HepG2 (cell line): ENCODE measurements at regions of chr11 and their contacts with region 1.

Region 1: DNA sequence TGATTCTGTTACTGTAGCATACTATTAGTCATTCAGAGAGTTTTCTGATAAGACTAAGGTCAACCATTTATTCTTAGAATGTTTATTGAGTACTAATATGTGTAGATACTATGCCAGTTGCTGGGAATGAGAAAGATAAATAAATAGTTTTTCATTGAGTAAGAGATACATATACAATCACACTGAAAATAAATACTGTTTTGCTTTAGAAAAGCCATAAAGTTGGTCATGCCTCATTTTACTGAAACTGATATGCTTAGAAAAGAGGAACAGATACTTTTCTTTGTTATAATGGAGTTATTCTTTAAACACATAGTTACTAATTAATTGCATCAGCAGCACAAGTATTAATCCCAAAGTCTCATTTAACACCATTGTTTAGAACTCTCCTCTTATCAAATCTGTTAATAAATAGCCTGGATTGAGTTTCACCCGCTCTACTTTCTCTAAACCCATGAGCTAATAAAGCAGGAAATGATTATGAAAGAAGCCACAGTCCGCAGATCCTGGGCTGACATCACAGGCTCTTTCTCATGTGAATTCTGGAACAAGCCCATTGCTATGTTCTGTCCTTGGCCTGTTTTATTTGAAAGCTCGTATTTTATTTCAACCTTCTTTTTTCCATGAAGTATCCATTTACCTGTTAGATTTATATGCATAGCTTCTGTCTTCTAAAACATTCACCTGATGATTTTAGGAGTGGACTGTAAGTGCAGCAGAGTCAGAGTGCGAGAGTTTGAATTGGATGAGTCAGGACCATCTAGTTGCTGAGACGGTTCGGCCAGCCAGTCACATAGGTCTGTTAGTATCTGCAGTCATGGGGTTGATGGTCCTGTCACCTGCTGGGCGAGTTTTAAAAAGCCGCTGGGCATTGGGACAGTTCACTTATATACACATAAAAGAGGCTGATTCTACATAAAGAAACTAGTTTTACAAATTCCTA is 35.5 kb downstream of the PIWIL4 start:
- DNase-seq: peak; percentile 66
- ATAC-seq: peak; percentile 100
- H3K4me3 ChIP-seq: no peak overlapping the region
- H3K27ac ChIP-seq: no peak overlapping the region
- H3K4me1 ChIP-seq: peaks cover 8% of the 10 kb centered on the region
- H3K27me3 ChIP-seq: no peaks in the 10 kb centered on the region; a peak in 1 of 5 replicates
- CTCF ChIP-seq: peak; percentile 73
- EP300 ChIP-seq: no peak
- POLR2A ChIP-seq: no peak
- RAD21 ChIP-seq: no peak

Region 2: GRCh38 chr11:93895106-93895862 is 707.4 kb before region 1 on chr11:
- CTCF ChIA-PET with region 1: interaction called, 11 read pairs
- POLR2A ChIA-PET with region 1: no interaction called
- in situ Hi-C with region 1: no loop called
- intact Hi-C with region 1: no loop called
- DNase-seq: peak; percentile 37
- ATAC-seq: peak; percentile 78
- H3K4me3 ChIP-seq: no peak overlapping the region
- H3K27ac ChIP-seq: no peak overlapping the region
- H3K4me1 ChIP-seq: no peaks in the 10 kb centered on the region
- H3K27me3 ChIP-seq: peaks cover 0 to 5% of the 10 kb centered on the region in 2 experiments; a peak in 1 of 5 replicates
- CTCF ChIP-seq: peak; percentile 73
- EP300 ChIP-seq: no peak
- POLR2A ChIP-seq: no peak
- RAD21 ChIP-seq: 0 out of 2 replicates have a peak, but pooled peaks have one; percentile 35

Region 3: GRCh38 chr11:93921695-93922468 is 680.8 kb before region 1 on chr11:
- CTCF ChIA-PET with region 1: no interaction called
- POLR2A ChIA-PET with region 1: no interaction called
- in situ Hi-C with region 1: no loop called
- intact Hi-C with region 1: loop called (anchors 10 kb)
- DNase-seq: peak; percentile 56
- ATAC-seq: peak; percentile 85
- H3K4me3 ChIP-seq: no peak overlapping the region
- H3K27ac ChIP-seq: no peak overlapping the region
- H3K4me1 ChIP-seq: peaks cover 19% of the 10 kb centered on the region
- H3K27me3 ChIP-seq: no peaks in the 10 kb centered on the region
- CTCF ChIP-seq: peak; percentile 87
- EP300 ChIP-seq: no peak
- POLR2A ChIP-seq: no peak
- RAD21 ChIP-seq: peak; percentile 76

Region 4: DNA sequence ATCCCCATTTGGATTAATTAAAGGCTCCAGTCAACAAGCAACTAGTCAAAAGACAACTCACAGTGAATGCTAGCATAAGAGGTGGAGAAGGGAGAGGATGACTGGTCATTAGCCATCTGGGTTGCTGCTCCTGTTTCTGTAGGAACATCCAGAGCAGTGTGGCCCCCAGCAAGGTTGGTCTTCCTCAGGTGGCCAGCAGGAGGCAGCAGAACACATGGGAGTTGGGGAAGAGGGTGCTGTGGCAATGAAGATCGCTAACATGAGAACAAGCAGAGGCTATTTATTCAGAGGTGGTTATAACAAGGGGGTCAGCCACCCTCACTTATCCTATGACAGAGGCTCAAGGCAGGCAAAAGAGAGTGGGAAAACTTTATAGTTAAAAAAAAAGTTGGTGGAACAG is 277.0 kb before region 1 on chr11:
- CTCF ChIA-PET with region 1: no interaction called
- POLR2A ChIA-PET with region 1: no interaction called
- in situ Hi-C with region 1: no loop called
- intact Hi-C with region 1: loop called (anchors 1 kb)
- DNase-seq: peak; percentile 39
- ATAC-seq: peak; percentile 95
- H3K4me3 ChIP-seq: no peak overlapping the region
- H3K27ac ChIP-seq: no peak overlapping the region
- H3K4me1 ChIP-seq: no peaks in the 10 kb centered on the region
- H3K27me3 ChIP-seq: no peaks in the 10 kb centered on the region; a peak in 1 of 5 replicates
- CTCF ChIP-seq: peak; percentile 84
- EP300 ChIP-seq: no peak
- POLR2A ChIP-seq: no peak
- RAD21 ChIP-seq: peak; percentile 71

Region 5: DNA sequence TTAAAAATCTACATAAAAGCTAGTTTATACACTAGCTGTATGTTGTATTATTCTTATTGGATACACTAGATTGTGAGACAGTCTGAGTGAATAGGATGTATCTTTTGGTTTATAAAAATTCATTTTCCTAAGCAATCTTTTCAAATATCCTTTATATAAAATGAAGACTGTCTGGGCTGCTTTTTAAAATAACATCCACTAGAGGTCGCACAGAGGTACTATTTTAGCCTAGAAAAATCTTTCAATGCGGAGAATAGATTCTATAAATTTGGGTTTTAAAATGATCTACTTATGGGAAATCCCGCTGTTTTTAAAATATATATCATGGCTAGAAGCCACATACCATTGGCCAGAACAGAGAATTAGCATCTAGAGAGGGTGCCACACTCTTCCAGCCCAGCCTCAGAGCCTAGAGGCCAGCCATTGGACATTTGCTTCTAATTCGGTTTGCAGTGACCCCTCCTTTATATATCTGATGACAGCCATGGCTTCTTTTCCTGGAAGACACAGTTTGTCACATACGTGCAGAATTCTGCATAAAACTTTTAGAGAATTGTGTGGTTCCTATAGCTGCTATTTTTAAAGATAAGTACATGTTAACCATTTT is 83.1 kb before region 1 on chr11:
- CTCF ChIA-PET with region 1: interaction called, 8 read pairs
- POLR2A ChIA-PET with region 1: no interaction called
- in situ Hi-C with region 1: loop called (anchors 5 kb)
- intact Hi-C with region 1: loop called (anchors 1 kb)
- DNase-seq: no peak
- ATAC-seq: no peak
- H3K4me3 ChIP-seq: no peak overlapping the region
- H3K27ac ChIP-seq: no peak overlapping the region
- H3K4me1 ChIP-seq: peaks cover 23% of the 10 kb centered on the region
- H3K27me3 ChIP-seq: no peaks in the 10 kb centered on the region
- CTCF ChIP-seq: peak; percentile 43
- EP300 ChIP-seq: no peak
- POLR2A ChIP-seq: no peak
- RAD21 ChIP-seq: no peak

Region 6: DNA sequence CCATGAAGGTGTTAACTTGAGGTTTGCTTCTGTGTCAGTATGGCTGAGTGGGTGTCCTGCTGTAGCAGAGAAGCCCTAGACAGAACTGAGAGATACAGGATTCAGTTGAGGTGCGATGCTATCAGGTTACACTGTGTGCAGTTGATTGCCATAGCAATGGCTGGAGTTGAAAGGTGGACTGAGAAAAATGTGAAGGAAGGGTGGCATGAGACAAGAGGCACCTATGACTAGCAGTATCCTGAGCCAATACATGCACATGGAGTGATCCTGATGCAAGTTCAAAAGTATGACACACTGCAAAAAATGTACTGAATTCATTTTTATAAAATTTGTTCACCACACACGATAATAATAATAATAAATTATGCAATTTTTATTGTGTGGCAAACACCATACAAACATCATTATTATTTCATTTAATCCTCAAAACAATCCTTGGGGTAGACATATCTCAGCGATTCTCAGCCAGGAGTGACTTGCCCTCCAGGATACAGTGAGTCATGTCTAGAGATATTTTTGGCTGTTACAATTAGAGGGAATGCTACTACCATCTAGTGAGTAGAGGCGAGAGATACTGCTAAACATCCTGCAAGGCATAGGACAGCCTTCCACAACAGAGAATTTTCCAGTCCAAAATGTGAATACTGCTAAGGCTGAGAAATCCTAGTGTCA is 39.4 kb before region 1 on chr11:
- CTCF ChIA-PET with region 1: no interaction called
- POLR2A ChIA-PET with region 1: no interaction called
- in situ Hi-C with region 1: no loop called
- intact Hi-C with region 1: no loop called
- DNase-seq: no peak
- ATAC-seq: no peak
- H3K4me3 ChIP-seq: no peak overlapping the region
- H3K27ac ChIP-seq: no peak overlapping the region
- H3K4me1 ChIP-seq: no peaks in the 10 kb centered on the region
- H3K27me3 ChIP-seq: no peaks in the 10 kb centered on the region
- CTCF ChIP-seq: no peak
- EP300 ChIP-seq: no peak
- POLR2A ChIP-seq: no peak
- RAD21 ChIP-seq: no peak

Region 7: GRCh38 chr11:94721565-94722292 is 119.0 kb after region 1 on chr11:
- CTCF ChIA-PET with region 1: no interaction called
- POLR2A ChIA-PET with region 1: no interaction called
- in situ Hi-C with region 1: no loop called
- intact Hi-C with region 1: no loop called
- DNase-seq: no peak
- ATAC-seq: no peak
- H3K4me3 ChIP-seq: no peak overlapping the region
- H3K27ac ChIP-seq: no peak overlapping the region
- H3K4me1 ChIP-seq: no peaks in the 10 kb centered on the region
- H3K27me3 ChIP-seq: 0 out of 5 replicates have a peak, but pooled peaks cover 0 to 5% of the 10 kb centered on the region in 2 experiments
- CTCF ChIP-seq: no peak
- EP300 ChIP-seq: no peak
- POLR2A ChIP-seq: no peak
- RAD21 ChIP-seq: no peak